ENCODE measurements at regions of chr17 and their contacts with region 1.

Region 1: DNA sequence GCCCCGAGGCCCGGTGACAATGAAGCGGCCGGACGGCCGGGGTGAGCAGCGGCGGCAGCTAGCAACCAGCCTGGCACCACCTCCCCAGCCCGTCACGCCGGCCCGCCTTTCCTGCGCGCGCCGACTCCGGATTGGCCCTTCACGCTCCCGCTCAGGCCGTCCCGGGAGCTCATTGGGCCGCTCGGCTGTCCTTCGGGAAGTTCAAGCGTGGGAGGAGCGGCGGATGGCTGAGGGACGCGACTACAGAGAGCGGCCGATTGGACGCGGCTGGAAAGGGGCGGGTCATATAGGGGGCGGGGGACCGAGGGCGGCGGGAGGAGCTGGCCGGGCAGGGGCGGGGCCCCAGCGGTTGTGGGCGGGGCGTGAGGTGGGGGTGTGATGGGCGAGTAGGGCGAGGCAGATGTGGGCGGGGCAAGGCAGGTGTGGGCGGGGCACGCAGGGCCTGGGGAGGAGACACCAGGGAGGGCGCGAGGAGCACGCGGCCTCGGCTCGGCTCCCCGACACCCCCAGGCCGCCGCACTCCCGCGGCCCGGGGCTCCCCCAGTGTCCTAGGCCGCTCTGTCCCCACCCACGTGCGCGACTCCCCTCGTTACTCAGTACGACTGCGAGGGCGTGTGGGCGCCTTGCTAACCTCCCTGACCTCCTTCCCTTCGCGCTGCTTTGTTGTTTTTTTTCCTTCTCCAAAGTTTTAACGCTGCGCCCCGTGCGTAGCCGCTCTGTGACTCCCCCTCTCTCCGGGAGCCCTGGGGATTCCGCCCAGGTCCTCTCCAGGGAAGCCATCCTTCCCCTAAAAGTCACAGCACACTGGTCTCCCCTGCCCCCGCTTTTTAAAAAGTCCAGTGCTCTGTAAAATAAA is at the start of gene CEP131:
- DNase-seq: peak; percentile 98 to 99 (median 98)
- ATAC-seq: peak; percentile 100
- H3K4me3 ChIP-seq: peak within 1 kb of the TSS; percentile 93
- H3K27ac ChIP-seq: peak within 1 kb of the TSS; percentile 86
- H3K4me1 ChIP-seq: peaks cover 14 to 41% of the 10 kb centered on the region in 2 experiments
- H3K27me3 ChIP-seq: no peaks in the 10 kb centered on the region
- CTCF ChIP-seq: no peak
- EP300 ChIP-seq: no peak
- POLR2A ChIP-seq: peak; percentile 83
- RAD21 ChIP-seq: no peak
- polyA plus RNA-seq, gene CEP131: 0.24 to 0.34 TPM

Region 2: GRCh38 chr17:80694992-80695912 is 527.9 kb before region 1 on chr17:
- CTCF ChIA-PET with region 1: no interaction called
- POLR2A ChIA-PET with region 1: no interaction called
- in situ Hi-C with region 1: no loop called
- intact Hi-C with region 1: no loop called
- DNase-seq: no peak
- ATAC-seq: no peak
- H3K4me3 ChIP-seq: no peak overlapping the region
- H3K27ac ChIP-seq: no peak overlapping the region
- H3K4me1 ChIP-seq: peaks cover 3 to 23% of the 10 kb centered on the region in 2 experiments; a peak in 3 of 5 replicates
- H3K27me3 ChIP-seq: no peaks in the 10 kb centered on the region; a peak in 1 of 5 replicates
- CTCF ChIP-seq: no peak
- EP300 ChIP-seq: no peak
- POLR2A ChIP-seq: no peak
- RAD21 ChIP-seq: no peak

Region 3: DNA sequence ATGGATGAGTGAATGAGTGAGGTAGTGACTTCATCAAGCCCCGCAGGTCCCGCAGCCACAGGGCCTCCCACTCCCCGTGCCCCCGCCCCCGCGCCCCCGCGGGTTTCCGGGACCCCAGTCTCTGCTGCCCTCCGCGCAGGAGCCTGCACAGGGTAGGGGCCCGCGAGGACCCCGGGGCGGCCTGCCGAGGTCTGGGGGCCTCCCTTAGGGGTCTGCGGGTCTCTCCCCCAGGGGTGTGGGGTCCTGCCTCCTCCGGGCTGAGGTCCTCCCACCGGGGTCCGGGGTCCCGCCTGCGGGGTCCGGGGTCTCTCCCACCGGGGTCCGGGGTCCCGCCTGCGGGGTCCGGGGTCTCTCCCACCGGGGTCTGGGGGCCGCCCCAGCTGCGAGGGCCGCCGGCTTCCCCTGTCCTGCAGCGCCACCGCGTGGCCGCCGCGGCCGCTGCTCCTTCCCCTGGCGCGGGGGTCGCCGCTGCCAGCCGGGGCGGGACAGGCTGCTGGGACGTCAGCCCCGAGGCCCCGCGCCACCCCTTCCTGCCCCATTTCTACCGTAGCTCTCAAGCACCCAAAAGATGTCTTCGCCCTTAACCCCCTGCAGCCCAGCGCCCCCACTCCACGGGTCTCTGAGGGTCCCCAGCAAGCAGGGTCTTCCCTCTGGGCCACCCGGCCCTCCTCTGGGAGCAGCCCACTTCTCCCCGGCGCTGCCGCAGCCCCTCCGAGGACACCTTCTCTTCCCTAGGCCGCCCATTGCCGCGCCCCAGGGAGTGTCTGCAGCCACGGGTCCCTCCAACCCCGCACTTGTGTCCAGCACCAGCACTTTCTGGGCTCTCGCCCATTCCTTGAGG is 241.9 kb before region 1 on chr17:
- CTCF ChIA-PET with region 1: no interaction called
- POLR2A ChIA-PET with region 1: no interaction called
- in situ Hi-C with region 1: no loop called
- intact Hi-C with region 1: loop called (anchors 10 kb)
- DNase-seq: peak in 3 of 4 experiments; percentile 80 to 83 (median 82)
- ATAC-seq: peak; percentile 84
- H3K4me3 ChIP-seq: peak overlapping the region; percentile 22; the same call in 1 of the 2 replicates
- H3K27ac ChIP-seq: no peak overlapping the region
- H3K4me1 ChIP-seq: peaks cover 0 to 38% of the 10 kb centered on the region in 2 experiments; a peak in 3 of 5 replicates
- H3K27me3 ChIP-seq: peaks cover 12 to 31% of the 10 kb centered on the region in 2 experiments; a peak in 4 of 5 replicates
- CTCF ChIP-seq: peak; percentile 59 to 77 (median 61)
- EP300 ChIP-seq: no peak
- POLR2A ChIP-seq: no peak
- RAD21 ChIP-seq: peak; percentile 75 to 88

Region 4: GRCh38 chr17:81194941-81195901 is 27.9 kb before region 1 on chr17:
- CTCF ChIA-PET with region 1: no interaction called
- POLR2A ChIA-PET with region 1: no interaction called
- in situ Hi-C with region 1: no loop called
- intact Hi-C with region 1: no loop called
- DNase-seq: no peak
- ATAC-seq: no peak
- H3K4me3 ChIP-seq: no peak overlapping the region
- H3K27ac ChIP-seq: no peak overlapping the region
- H3K4me1 ChIP-seq: peaks cover 10 to 63% of the 10 kb centered on the region in 2 experiments
- H3K27me3 ChIP-seq: no peaks in the 10 kb centered on the region
- CTCF ChIP-seq: no peak
- EP300 ChIP-seq: no peak
- POLR2A ChIP-seq: no peak
- RAD21 ChIP-seq: no peak